ENCODE measurements at regions of chr2 and their contacts with region 1.

Region 1: GRCh38 chr2:201231781-201232466 is 28.4 kb upstream of the CASP8 start:
- DNase-seq: peak; percentile 98
- H3K4me3 Mint-ChIP-seq: peak overlapping the region; percentile 71
- H3K27ac Mint-ChIP-seq: peak overlapping the region; percentile 84
- H3K4me1 Mint-ChIP-seq: peaks cover 51% of the 10 kb centered on the region
- H3K27me3 Mint-ChIP-seq: no peaks in the 10 kb centered on the region

Region 2: GRCh38 chr2:199895406-199895805 is 1336.5 kb before region 1 on chr2:
- CTCF ChIA-PET with region 1: no interaction called
- intact Hi-C with region 1: no loop called
- DNase-seq: no peak
- H3K4me3 Mint-ChIP-seq: no peak overlapping the region
- H3K27ac Mint-ChIP-seq: no peak overlapping the region
- H3K4me1 Mint-ChIP-seq: no peaks in the 10 kb centered on the region
- H3K27me3 Mint-ChIP-seq: peaks cover under 1% of the 10 kb centered on the region

Region 3: GRCh38 chr2:200811336-200812121 is 420.4 kb before region 1 on chr2 and contains the start of gene BZW1:
- CTCF ChIA-PET with region 1: interaction called, 4 read pairs
- intact Hi-C with region 1: loop called (anchors 2 kb)
- DNase-seq: peak; percentile 99
- H3K4me3 Mint-ChIP-seq: peak within 1 kb of the TSS; percentile 99
- H3K27ac Mint-ChIP-seq: peak within 1 kb of the TSS; percentile 100
- H3K4me1 Mint-ChIP-seq: peaks cover 46% of the 10 kb centered on the region
- H3K27me3 Mint-ChIP-seq: no peaks in the 10 kb centered on the region
- total RNA-seq, gene BZW1: 423 to 442 TPM

Region 4: DNA sequence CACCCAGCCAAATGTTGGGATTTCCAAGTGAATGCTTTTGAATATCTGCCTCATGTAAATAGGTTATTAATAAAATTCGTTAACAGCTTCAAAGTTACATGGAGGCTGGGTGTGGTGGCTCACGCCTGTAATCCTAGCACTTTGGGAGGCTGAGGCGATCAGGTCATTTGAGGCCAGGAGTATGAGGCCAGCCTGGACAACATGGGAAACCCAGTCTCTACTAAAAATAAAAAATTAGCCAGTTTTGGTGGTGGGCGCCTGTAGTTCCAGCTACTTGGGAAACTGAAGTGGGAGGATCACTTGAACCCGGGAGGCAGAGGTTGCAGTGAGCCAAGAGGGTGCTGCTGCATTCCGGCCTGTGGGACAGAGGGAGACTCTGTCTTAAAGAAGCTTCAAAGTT is 410.2 kb before region 1 on chr2:
- CTCF ChIA-PET with region 1: no interaction called
- intact Hi-C with region 1: no loop called
- DNase-seq: no peak
- H3K4me3 Mint-ChIP-seq: no peak overlapping the region
- H3K27ac Mint-ChIP-seq: peak overlapping the region; percentile 69
- H3K4me1 Mint-ChIP-seq: peaks cover 28% of the 10 kb centered on the region
- H3K27me3 Mint-ChIP-seq: no peaks in the 10 kb centered on the region

Region 5: DNA sequence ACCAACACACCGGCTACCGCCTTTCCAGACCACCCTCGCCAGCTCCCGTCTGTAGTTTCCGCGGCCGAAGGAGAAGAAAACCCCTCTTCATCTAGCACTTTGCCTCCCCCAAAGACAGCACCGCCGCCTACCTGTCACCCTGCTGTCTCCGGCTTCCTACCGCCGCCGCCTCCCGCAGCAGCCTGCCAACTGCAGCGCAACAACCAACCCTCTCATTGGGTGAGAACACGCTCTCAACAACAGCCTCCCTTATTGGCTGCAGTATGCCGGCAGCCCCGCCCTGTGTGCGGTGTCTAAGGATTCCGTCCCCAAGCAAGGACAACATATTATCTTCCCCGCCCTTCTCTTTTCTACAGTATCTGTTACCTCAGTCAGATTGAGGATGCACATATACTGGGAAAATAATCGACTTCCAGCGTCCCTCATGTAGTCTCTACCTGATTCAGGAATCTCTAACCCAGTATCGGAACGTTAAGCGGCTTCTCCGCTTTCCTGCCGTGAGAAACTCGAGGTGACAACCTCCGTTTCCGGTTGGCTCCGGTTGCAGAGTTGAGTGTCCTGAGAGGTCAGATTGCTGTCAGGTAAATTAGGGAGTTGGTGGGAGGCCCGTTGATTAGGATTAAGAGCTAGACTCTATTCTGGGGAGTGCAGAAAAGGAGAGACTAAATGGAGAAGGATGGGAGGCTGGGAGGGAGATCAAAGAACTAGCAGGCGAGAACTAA is 160.3 kb before region 1 on chr2 and contains the starts of genes HYCC2 and NDUFB3:
- CTCF ChIA-PET with region 1: interaction called, 22 read pairs
- intact Hi-C with region 1: loop called (anchors 1 kb)
- DNase-seq: peak; percentile 96
- H3K4me3 Mint-ChIP-seq: peak within 1 kb of the TSS; percentile 96
- H3K27ac Mint-ChIP-seq: peak within 1 kb of the TSS; percentile 92
- H3K4me1 Mint-ChIP-seq: peaks cover 51% of the 10 kb centered on the region
- H3K27me3 Mint-ChIP-seq: no peaks in the 10 kb centered on the region
- total RNA-seq, gene HYCC2: 19.1 TPM
- total RNA-seq, gene NDUFB3: 159 to 162 TPM

Region 6: DNA sequence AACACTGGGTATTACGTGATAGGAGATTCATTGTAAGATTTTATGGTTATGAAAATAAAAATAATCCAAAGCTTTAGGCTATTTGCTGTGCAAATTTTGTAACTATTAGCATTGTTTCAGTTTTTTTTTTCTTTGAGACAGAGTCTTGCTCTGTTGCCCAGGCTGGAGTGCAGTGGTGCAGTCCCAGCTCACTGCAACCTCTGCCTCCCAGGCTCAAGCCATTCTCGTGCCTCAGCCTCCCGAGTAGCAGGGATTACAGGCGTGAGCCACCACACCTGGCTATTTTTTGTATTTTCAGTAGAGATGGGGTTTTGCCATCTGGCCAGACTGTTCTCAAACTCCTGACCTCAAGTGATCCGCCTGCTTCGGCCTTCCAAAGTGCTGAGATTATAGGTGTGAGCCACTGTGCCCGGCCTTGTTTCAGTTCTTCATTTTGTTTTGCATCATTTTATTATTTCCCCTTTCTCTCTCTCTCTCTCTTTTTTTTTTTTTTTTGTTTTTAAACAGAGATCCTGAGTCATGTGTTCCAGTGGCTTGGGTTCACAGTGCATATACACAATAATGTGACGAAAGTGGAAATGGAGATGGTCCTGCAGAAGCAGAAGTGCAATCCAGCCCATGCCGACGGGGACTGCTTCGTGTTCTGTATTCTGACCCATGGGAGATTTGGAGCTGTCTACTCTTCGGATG is 23.2 kb before region 1 on chr2:
- CTCF ChIA-PET with region 1: interaction called, 30 read pairs
- intact Hi-C with region 1: loop called (anchors 1 kb)
- DNase-seq: no peak
- H3K4me3 Mint-ChIP-seq: no peak overlapping the region
- H3K27ac Mint-ChIP-seq: no peak overlapping the region
- H3K4me1 Mint-ChIP-seq: peaks cover 43% of the 10 kb centered on the region
- H3K27me3 Mint-ChIP-seq: no peaks in the 10 kb centered on the region

Region 7: GRCh38 chr2:201363857-201364560 is 132.1 kb after region 1 on chr2:
- CTCF ChIA-PET with region 1: interaction called, 66 read pairs
- intact Hi-C with region 1: loop called (anchors 1 kb)
- DNase-seq: peak; percentile 48
- H3K4me3 Mint-ChIP-seq: no peak overlapping the region
- H3K27ac Mint-ChIP-seq: no peak overlapping the region
- H3K4me1 Mint-ChIP-seq: peaks cover 13% of the 10 kb centered on the region
- H3K27me3 Mint-ChIP-seq: no peaks in the 10 kb centered on the region

Region 8: GRCh38 chr2:201558665-201559064 is 326.7 kb after region 1 on chr2:
- CTCF ChIA-PET with region 1: no interaction called
- intact Hi-C with region 1: no loop called
- DNase-seq: no peak
- H3K4me3 Mint-ChIP-seq: no peak overlapping the region
- H3K27ac Mint-ChIP-seq: no peak overlapping the region
- H3K4me1 Mint-ChIP-seq: no peaks in the 10 kb centered on the region
- H3K27me3 Mint-ChIP-seq: no peaks in the 10 kb centered on the region

Region 9: GRCh38 chr2:201950606-201951005 is 718.7 kb after region 1 on chr2:
- CTCF ChIA-PET with region 1: no interaction called
- intact Hi-C with region 1: no loop called
- DNase-seq: no peak
- H3K4me3 Mint-ChIP-seq: no peak overlapping the region
- H3K27ac Mint-ChIP-seq: no peak overlapping the region
- H3K4me1 Mint-ChIP-seq: no peaks in the 10 kb centered on the region
- H3K27me3 Mint-ChIP-seq: peaks cover 3% of the 10 kb centered on the region

Region 10: DNA sequence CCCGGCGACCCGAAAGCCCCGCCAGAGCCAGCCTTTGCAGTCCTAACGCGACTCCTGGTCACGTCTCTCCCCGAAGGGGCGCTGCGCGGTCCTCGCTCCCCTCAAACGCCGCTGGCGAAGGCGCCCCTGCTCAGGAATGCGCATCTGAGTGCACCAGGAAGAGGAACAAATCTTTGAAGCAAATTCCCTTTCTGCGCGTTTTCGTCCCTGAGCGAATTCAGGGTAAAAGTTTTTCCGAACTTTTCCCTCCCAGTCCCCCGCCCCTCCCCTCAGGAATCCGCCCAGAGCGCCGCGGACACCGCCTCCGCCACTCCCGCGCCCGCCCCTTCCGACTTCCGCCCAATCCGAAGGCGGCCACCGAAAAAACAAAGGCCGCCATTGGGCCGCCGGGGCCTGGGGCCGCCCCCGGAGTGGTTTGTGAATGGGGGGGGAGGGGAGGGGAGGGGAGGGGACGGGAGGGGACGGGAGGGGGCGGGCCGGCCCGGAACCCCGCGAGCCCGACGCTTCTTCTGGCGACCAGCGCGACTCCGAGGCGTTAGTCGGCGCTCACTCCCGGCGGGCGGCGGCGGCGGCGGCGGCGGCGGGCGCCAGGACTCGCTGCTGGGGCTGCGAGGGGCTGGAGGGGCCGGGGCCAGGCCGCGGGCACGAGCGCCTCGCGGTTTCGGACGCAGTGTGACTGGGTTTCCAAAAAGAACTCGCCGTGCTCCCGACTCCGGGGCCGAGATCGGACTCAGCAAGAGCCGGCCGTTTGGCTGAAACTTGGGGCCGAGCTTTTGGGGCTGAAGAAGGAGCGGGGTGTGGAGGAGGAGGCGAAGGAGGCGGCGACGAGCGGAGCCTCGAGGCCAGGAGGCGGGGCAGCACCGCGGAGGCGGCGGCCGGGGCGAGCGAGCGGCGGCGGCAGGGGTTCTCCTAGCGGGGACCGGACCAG is 801.7 kb after region 1 on chr2 and contains the start of gene FZD7:
- CTCF ChIA-PET with region 1: no interaction called
- intact Hi-C with region 1: loop called (anchors 10 kb)
- DNase-seq: peak; percentile 90
- H3K4me3 Mint-ChIP-seq: peak within 1 kb of the TSS; percentile 79
- H3K27ac Mint-ChIP-seq: no peak within 1 kb of the TSS
- H3K4me1 Mint-ChIP-seq: peaks cover 12% of the 10 kb centered on the region
- H3K27me3 Mint-ChIP-seq: peaks cover 18% of the 10 kb centered on the region
- total RNA-seq, gene FZD7: 0.17 to 0.43 TPM

Measured in activated naive CD4-positive, alpha-beta T cell treated with anti-CD3 and anti-CD28 coated beads for 36 hours (primary cell).